CD4-positive, alpha-beta T cell (primary cell): ENCODE measurements at regions of chr6 and their contacts with region 1.

Region 1: GRCh38 chr6:11711003-11711983 is 67.3 kb downstream of the ADTRP start:
- DNase-seq: peak in 7 of 14 experiments; percentile 26 to 56 (median 46)
- ATAC-seq: peak; percentile 43
- H3K4me3 ChIP-seq: no peak overlapping the region
- H3K4me3 Mint-ChIP-seq: peak overlapping the region; percentile 44
- H3K27ac ChIP-seq: peak overlapping the region; percentile 48 to 77
- H3K27ac Mint-ChIP-seq: peak overlapping the region; percentile 100
- H3K4me1 ChIP-seq: peaks cover 68% of the 10 kb centered on the region
- H3K4me1 Mint-ChIP-seq: peaks cover 82% of the 10 kb centered on the region
- H3K27me3 ChIP-seq: no peaks in the 10 kb centered on the region
- H3K27me3 Mint-ChIP-seq: no peaks in the 10 kb centered on the region
- CTCF ChIP-seq: no peak

Region 2: DNA sequence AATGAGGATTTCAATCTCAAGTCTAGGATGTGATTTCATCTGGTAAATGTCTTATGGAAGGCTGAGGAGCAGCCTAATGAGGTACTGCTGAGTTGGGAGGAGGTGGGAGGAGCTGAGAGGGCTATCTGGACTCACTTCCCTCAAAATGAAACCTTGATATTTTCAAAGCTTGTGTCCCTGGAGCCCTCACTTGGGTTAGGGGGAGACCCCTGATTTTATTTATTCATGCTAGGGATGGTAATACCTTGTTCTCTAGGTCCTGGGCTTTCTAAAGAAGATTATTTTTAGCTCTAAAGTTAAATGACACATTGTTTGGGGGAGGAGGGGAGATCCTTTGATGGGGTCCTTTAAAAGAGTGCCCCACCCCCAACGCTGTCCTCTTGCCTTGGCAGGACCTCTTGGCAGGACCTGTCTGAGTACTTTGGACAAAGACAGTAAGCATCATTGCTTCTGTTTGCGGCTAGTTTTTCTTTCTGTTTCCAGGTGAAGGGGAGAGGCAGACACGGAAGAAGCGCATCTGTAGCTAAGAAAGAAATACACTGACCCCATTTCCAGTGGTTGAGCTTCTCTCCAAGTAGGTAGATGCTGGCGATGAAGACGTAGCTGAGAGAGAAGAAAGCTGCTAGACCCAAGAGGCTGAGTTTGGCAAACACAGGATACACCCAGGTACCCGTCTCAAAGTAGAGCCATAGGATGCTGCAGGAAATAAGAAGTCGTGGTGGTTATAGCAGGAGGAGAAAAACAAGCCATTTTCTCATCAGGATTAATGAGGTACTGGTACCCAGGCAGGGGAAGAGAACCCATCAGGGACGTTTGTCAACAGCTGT is 11.7 kb after region 1 on chr6:
- CTCF ChIA-PET with region 1: no interaction called
- POLR2A ChIA-PET with region 1: interaction called, 37 read pairs
- intact Hi-C with region 1: loop called in 1 of 2 experiments (anchors 2 kb)
- DNase-seq: peak in 2 of 14 experiments; percentile 32 to 44
- ATAC-seq: peak; percentile 45
- H3K4me3 ChIP-seq: no peak overlapping the region
- H3K4me3 Mint-ChIP-seq: peak overlapping the region; percentile 14
- H3K27ac ChIP-seq: peak overlapping the region in 1 of 2 donors; percentile 18
- H3K27ac Mint-ChIP-seq: peak overlapping the region; percentile 58
- H3K4me1 ChIP-seq: peaks cover 33% of the 10 kb centered on the region
- H3K4me1 Mint-ChIP-seq: peaks cover 53% of the 10 kb centered on the region
- H3K27me3 ChIP-seq: no peaks in the 10 kb centered on the region
- H3K27me3 Mint-ChIP-seq: no peaks in the 10 kb centered on the region
- CTCF ChIP-seq: no peak

Region 3: GRCh38 chr6:11727998-11728961 is 17.0 kb after region 1 on chr6:
- CTCF ChIA-PET with region 1: no interaction called
- POLR2A ChIA-PET with region 1: interaction called, 37 read pairs
- intact Hi-C with region 1: loop called in 1 of 2 experiments (anchors 2 kb)
- DNase-seq: peak in 11 of 14 experiments; percentile 17 to 72 (median 52)
- ATAC-seq: peak; percentile 70
- H3K4me3 ChIP-seq: peak overlapping the region; percentile 48
- H3K4me3 Mint-ChIP-seq: peak overlapping the region; percentile 74
- H3K27ac ChIP-seq: peak overlapping the region; percentile 65 to 71
- H3K27ac Mint-ChIP-seq: peak overlapping the region; percentile 93
- H3K4me1 ChIP-seq: peaks cover 63% of the 10 kb centered on the region
- H3K4me1 Mint-ChIP-seq: peaks cover 85% of the 10 kb centered on the region
- H3K27me3 ChIP-seq: no peaks in the 10 kb centered on the region
- H3K27me3 Mint-ChIP-seq: no peaks in the 10 kb centered on the region
- CTCF ChIP-seq: no peak

Region 4: DNA sequence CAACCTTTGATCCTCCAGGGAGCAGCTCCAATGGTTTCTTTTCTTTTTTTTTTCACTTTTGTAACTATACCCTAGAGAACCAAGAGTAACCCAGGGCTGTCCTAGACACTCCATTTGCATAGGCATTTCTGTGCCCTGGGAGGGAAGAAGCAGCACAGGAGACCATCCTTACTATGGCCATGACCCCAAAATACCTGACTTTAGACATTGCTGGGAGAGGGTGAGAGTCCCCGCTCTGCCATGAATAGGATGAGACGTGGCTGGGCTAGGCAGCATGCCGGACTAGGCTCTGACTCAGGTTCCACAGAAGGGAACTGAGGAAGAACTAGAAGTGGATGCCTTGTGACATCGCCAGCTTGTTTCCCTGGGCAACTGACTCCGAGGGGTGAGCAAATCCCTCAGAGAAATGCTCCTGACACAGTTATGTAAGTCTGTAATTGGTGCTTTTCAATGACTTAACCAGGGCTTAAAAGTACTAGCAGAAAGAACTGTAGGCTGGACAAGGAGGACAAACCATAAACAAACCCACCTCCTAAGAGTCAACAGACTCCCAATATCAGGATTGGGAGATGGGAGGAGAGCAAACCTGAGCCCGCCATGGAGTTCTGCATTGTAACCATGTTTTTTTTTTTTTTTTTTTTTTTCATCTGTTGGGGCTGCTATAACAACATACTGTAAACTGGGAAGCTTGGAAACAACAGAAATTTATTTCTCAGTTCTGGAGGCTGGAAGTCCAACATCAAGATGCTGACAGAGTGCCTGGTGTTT is 68.2 kb after region 1 on chr6:
- CTCF ChIA-PET with region 1: no interaction called
- POLR2A ChIA-PET with region 1: no interaction called
- intact Hi-C with region 1: loop called in 1 of 2 experiments (anchors 5 kb)
- DNase-seq: peak in 2 of 14 experiments; percentile 45 to 59
- ATAC-seq: no peak
- H3K4me3 ChIP-seq: no peak overlapping the region
- H3K4me3 Mint-ChIP-seq: no peak overlapping the region
- H3K27ac ChIP-seq: no peak overlapping the region
- H3K27ac Mint-ChIP-seq: no peak overlapping the region
- H3K4me1 ChIP-seq: no peaks in the 10 kb centered on the region
- H3K4me1 Mint-ChIP-seq: no peaks in the 10 kb centered on the region
- H3K27me3 ChIP-seq: no peaks in the 10 kb centered on the region
- H3K27me3 Mint-ChIP-seq: no peaks in the 10 kb centered on the region
- CTCF ChIP-seq: no peak

Region 5: GRCh38 chr6:12051861-12052368 is 340.6 kb after region 1 on chr6:
- CTCF ChIA-PET with region 1: no interaction called
- POLR2A ChIA-PET with region 1: no interaction called
- intact Hi-C with region 1: loop called in 1 of 2 experiments (anchors 5 kb)
- DNase-seq: peak in 10 of 14 experiments; percentile 17 to 90 (median 45)
- ATAC-seq: peak; percentile 98
- H3K4me3 ChIP-seq: no peak overlapping the region
- H3K4me3 Mint-ChIP-seq: peak overlapping the region; percentile 26
- H3K27ac ChIP-seq: peak overlapping the region in 1 of 2 donors; percentile 3
- H3K27ac Mint-ChIP-seq: peak overlapping the region; percentile 84
- H3K4me1 ChIP-seq: peaks cover 10% of the 10 kb centered on the region
- H3K4me1 Mint-ChIP-seq: peaks cover 77% of the 10 kb centered on the region
- H3K27me3 ChIP-seq: no peaks in the 10 kb centered on the region
- H3K27me3 Mint-ChIP-seq: no peaks in the 10 kb centered on the region
- CTCF ChIP-seq: no peak